Prostate gland (tissue), 2 donors: ENCODE measurements at regions of chr11 and their contacts with region 1.

Region 1: DNA sequence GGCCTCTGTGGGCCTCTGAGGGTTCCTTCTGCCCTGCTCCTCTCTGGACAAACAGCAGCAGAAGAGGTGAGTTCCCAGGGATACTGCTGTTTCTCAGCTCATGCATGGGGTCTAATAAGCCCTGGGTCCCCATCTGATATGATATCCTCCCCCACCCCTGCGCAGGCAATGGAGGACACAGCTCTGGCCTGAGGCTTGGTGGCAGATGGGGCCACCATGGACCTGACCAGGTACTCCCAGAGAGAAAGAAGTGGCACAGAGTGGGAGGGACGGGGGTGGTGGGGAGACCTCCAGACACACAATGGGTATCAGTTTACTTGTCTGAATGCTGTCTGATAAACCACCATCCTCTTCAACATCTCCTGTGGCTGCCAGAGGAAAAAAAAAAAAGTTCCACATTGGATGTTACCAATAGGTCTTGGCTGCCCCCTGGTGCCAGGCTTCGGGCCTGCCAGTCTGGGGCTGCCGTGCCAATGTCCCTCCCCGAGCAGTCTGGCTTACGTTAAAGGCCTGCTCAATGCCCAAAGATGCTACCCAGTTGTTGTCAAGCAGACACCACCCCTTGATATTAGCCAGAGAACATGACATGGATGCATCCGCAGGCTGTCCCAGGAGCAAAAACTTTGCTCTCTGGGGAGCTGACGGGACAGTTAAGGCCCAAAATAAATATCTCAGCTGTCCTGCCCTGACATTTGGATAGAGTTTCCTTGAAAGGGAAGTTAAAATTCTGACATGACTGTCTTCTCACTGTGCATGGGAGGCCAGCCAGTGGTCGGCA is 27.9 kb upstream of the ABCC8 start:
- DNase-seq: peak; percentile 67
- H3K4me3 ChIP-seq: no peak overlapping the region
- H3K27ac ChIP-seq: no peak overlapping the region
- H3K4me1 ChIP-seq: no peaks in the 10 kb centered on the region
- H3K27me3 ChIP-seq: no peaks in the 10 kb centered on the region
- CTCF ChIP-seq: peak; percentile 75 to 92 (median 87)
- POLR2A ChIP-seq: no peak

Region 2: DNA sequence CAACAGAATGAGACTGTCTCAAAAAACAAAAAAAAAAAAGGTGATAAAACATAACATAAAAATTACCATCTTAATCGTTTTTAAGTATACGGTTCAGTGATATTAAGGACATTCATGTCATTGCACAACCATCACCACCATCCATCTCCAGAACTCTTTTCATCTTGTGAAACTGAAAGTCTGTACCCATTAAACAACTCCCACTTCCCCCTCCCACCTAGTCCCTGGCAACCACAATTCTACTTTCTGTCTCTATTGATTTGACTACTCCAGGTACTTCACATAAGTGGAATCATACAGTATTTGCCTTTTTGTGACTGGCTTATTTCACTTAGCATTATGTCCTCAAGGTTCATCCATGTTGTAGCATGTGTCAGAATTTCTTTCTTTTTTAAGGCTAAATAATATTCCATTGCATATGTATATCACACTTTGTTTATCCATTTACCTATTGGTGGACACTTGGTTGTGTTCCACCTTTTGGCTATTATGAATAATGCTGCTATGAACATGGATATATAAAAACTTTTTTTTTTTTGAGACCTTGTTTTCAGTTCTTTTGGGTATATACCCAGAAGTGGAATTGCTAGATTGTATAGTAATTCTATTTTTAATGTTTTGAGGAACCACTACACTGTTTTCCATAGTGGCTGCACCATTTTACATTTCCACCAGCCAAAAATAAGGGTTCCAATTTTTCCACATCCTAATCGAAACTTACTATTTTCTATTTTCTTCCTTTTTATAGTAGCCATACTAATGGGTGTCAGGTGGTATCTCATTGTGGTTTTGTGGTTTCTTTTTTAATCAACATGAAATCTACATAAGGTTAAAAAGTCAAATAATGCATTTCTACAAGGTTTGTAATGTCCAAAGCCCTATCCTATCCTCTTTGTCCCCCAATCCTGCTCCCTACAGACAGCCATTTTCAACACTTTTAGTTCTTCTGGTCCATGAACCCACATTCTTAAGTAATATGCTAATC is 273.4 kb before region 1 on chr11:
- intact Hi-C with region 1: loop called (anchors 10 kb)
- DNase-seq: no peak
- H3K4me3 ChIP-seq: no peak overlapping the region
- H3K27ac ChIP-seq: no peak overlapping the region
- H3K4me1 ChIP-seq: no peaks in the 10 kb centered on the region
- H3K27me3 ChIP-seq: no peaks in the 10 kb centered on the region
- CTCF ChIP-seq: no peak
- POLR2A ChIP-seq: no peak

Region 3: DNA sequence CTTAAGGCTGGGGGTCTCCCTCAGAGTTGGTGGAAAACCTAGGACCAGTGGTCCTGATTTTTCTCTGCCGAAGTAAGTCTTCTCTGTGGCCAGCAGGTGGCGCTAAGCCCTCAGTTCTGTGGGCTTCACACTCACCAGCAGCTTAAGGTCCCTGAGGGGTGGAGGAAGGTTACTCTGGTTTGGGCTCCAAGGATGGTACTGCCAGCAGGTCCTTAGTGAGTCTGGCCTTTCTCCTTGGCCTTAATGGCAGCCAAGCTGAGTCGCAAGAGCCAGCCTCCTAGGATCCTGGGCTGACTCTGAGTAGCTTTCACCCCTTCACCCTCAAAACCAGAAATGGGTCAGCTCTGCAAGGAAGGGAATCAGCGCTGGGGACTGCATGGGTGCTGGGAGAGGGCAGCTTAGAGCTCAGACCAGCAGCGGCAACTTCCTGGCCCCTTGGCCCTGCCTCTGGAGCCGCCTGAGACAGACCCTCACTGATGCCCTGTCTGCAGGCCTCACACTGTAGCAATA is 120.5 kb before region 1 on chr11:
- intact Hi-C with region 1: loop called (anchors 1 kb)
- DNase-seq: peak; percentile 75
- H3K4me3 ChIP-seq: no peak overlapping the region
- H3K27ac ChIP-seq: no peak overlapping the region
- H3K4me1 ChIP-seq: no peaks in the 10 kb centered on the region
- H3K27me3 ChIP-seq: no peaks in the 10 kb centered on the region
- CTCF ChIP-seq: peak; percentile 85 to 95 (median 86)
- POLR2A ChIP-seq: no peak

Region 4: DNA sequence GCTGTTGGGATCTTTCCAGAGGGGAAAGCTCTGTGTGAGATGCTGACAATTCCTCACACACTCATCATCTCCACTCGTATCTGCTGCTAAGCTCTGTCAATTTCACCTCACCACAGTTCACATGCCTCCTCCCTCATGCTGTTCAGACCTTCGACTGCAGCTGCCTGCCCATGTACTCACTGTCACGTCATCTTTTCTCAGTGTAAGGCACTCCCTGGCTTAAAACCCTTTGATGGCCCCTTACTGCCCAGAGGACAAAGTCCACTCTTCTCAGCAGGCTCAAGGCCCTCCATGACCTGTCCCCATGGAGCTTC is 27.3 kb after region 1 on chr11:
- intact Hi-C with region 1: no loop called
- DNase-seq: no peak
- H3K4me3 ChIP-seq: no peak overlapping the region
- H3K27ac ChIP-seq: no peak overlapping the region
- H3K4me1 ChIP-seq: no peaks in the 10 kb centered on the region
- H3K27me3 ChIP-seq: no peaks in the 10 kb centered on the region
- CTCF ChIP-seq: no peak
- POLR2A ChIP-seq: no peak